H1 (cell line): ENCODE measurements at regions of chr1 and their contacts with region 1.

Region 1: DNA sequence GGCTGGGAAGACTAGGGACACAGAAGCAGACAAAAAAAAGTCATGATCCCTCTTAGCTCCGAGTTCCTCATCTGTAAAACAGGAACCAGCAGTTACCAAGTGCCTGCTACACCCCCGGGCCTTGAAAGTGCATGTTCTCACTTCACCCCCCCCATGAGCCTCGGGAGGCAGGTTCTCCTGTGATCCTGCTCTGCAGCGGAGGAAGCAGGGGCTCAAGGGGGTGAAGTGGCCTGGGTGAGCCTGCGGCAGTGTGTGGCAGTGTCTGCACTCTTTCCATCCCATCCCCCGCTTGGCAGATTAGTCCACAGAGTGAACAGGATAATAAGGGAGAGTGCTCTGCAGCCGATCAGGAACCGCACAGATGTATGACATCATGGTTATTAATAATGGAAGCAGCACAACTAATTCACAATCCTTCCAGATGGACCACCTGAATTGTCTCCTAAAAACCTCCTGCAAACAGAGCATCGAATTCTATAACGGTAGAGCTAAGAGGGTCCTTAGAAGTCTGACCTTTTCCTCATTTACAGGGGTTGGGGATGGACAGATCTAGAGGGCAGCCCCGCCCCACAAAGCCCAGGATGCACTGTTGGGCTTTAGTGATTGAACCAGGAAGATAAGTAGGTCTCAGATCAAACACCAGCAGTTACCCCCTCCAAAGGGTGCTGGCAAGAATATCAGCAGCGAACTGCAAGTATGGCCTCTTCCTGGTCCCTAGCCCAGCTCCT is 174.1 kb upstream of the EDN2 start:
- DNase-seq: no peak
- H3K4me3 ChIP-seq: no peak overlapping the region
- H3K27ac ChIP-seq: no peak overlapping the region
- H3K4me1 ChIP-seq: peaks cover 0 to 8% (median 3%) of the 10 kb centered on the region in 4 experiments; a peak in 5 of 7 replicates
- H3K27me3 ChIP-seq: peaks cover 17 to 36% (median 28%) of the 10 kb centered on the region in 4 experiments
- CTCF ChIP-seq: no peak
- EP300 ChIP-seq: no peak
- POLR2A ChIP-seq: no peak
- RAD21 ChIP-seq: no peak

Region 2: GRCh38 chr1:41673378-41673777 is 14.8 kb after region 1 on chr1:
- CTCF ChIA-PET with region 1: interaction called, 15 read pairs
- POLR2A ChIA-PET with region 1: interaction called, 5 read pairs
- DNase-seq: no peak
- H3K4me3 ChIP-seq: no peak overlapping the region
- H3K27ac ChIP-seq: no peak overlapping the region
- H3K4me1 ChIP-seq: no peaks in the 10 kb centered on the region; a peak in 2 of 7 replicates
- H3K27me3 ChIP-seq: no peaks in the 10 kb centered on the region
- CTCF ChIP-seq: no peak
- EP300 ChIP-seq: no peak
- POLR2A ChIP-seq: no peak
- RAD21 ChIP-seq: no peak

Region 3: GRCh38 chr1:41720861-41721410 is 62.3 kb after region 1 on chr1:
- CTCF ChIA-PET with region 1: no interaction called
- POLR2A ChIA-PET with region 1: no interaction called
- DNase-seq: no peak
- H3K4me3 ChIP-seq: no peak overlapping the region
- H3K27ac ChIP-seq: no peak overlapping the region
- H3K4me1 ChIP-seq: peaks cover 0 to 3% (median 0%) of the 10 kb centered on the region in 4 experiments; a peak in 1 of 7 replicates
- H3K27me3 ChIP-seq: no peaks in the 10 kb centered on the region
- CTCF ChIP-seq: no peak
- EP300 ChIP-seq: no peak
- POLR2A ChIP-seq: no peak
- RAD21 ChIP-seq: no peak